Aorta (tissue), 5 donors: ENCODE measurements at regions of chr10 and their contacts with region 1.

Region 1: GRCh38 chr10:88386821-88387773 is 196.0 kb downstream of the RNLS start:
- DNase-seq: no peak
- ATAC-seq: peak; percentile 88
- H3K4me3 ChIP-seq: peak overlapping the region; percentile 31 to 90
- H3K27ac ChIP-seq: peak overlapping the region; percentile 68 to 82
- H3K4me1 ChIP-seq: no peaks in the 10 kb centered on the region
- H3K27me3 ChIP-seq: no peaks in the 10 kb centered on the region

Region 2: DNA sequence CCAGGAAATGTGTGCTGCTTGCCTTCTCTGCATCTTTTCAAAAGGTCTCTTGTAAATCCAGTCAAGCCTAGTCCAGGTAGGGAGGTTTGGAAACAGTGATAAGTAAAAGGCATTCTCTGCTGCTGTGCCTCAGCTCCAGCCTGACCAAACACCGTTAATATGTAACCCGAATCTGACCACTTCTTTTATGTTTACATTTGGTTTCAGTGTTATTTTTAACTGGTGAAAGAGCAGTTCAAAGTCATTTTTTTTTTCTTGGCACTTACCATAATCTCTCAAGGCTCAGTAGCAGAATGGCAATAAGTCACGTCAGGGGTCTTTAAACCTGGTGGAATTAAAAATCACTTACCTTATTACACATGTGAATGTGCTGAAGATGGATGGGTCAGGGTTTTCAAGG is 306.9 kb before region 1 on chr10:
- intact Hi-C with region 1: loop called in 1 of 2 experiments (anchors 10 kb)
- DNase-seq: no peak
- ATAC-seq: no peak
- H3K4me3 ChIP-seq: no peak overlapping the region
- H3K27ac ChIP-seq: peak overlapping the region in 1 of 2 donors; percentile 70
- H3K4me1 ChIP-seq: peaks cover 5 to 9% of the 10 kb centered on the region in 2 donors
- H3K27me3 ChIP-seq: no peaks in the 10 kb centered on the region

Region 3: DNA sequence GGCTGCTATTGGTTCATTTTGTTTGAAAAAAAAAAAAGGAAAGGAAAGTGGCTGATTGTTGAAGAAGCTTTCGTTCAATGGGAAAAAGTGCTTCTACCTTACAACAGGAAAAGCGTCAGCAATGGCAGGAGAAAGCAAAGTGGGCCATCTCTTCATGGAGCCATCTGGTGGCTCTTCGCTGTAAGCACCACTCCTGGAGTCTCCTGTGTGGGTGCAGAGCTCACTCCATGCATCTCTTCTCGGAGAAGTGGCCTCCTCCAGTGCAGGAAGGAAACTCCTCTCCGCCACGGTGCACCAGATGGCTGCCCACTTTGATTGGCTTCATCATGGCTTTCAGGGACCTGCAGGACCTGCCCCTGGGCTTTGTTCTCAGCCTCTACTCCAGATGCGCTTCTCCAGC is 272.7 kb before region 1 on chr10:
- intact Hi-C with region 1: loop called in 1 of 2 experiments (anchors 5 kb)
- DNase-seq: no peak
- ATAC-seq: peak; percentile 73
- H3K4me3 ChIP-seq: no peak overlapping the region
- H3K27ac ChIP-seq: no peak overlapping the region
- H3K4me1 ChIP-seq: peaks cover 2 to 3% of the 10 kb centered on the region in 2 donors
- H3K27me3 ChIP-seq: no peaks in the 10 kb centered on the region

Region 4: GRCh38 chr10:88227342-88228018 is 159.6 kb before region 1 on chr10:
- intact Hi-C with region 1: loop called in 1 of 2 experiments (anchors 10 kb)
- DNase-seq: no peak
- ATAC-seq: no peak
- H3K4me3 ChIP-seq: no peak overlapping the region
- H3K27ac ChIP-seq: peak overlapping the region in 1 of 2 donors; percentile 1
- H3K4me1 ChIP-seq: no peaks in the 10 kb centered on the region
- H3K27me3 ChIP-seq: no peaks in the 10 kb centered on the region